ENCODE measurements at regions of chr17 and their contacts with region 1.

Region 1: GRCh38 chr17:77834170-77835115 is 124.1 kb upstream of the TNRC6C start:
- DNase-seq: peak; percentile 72 to 74
- ATAC-seq: peak; percentile 75 to 86 (median 85)
- H3K4me3 ChIP-seq: no peak overlapping the region
- H3K4me3 Mint-ChIP-seq: peak overlapping the region; percentile 45
- H3K27ac ChIP-seq: no peak overlapping the region
- H3K27ac Mint-ChIP-seq: peak overlapping the region; percentile 7 to 88
- H3K4me1 ChIP-seq: peaks cover 54% of the 10 kb centered on the region
- H3K4me1 Mint-ChIP-seq: peaks cover 41 to 43% of the 10 kb centered on the region in 2 donors
- H3K27me3 ChIP-seq: no peaks in the 10 kb centered on the region
- H3K27me3 Mint-ChIP-seq: peaks cover 12 to 19% of the 10 kb centered on the region in 2 donors
- CTCF ChIP-seq: no peak

Region 2: DNA sequence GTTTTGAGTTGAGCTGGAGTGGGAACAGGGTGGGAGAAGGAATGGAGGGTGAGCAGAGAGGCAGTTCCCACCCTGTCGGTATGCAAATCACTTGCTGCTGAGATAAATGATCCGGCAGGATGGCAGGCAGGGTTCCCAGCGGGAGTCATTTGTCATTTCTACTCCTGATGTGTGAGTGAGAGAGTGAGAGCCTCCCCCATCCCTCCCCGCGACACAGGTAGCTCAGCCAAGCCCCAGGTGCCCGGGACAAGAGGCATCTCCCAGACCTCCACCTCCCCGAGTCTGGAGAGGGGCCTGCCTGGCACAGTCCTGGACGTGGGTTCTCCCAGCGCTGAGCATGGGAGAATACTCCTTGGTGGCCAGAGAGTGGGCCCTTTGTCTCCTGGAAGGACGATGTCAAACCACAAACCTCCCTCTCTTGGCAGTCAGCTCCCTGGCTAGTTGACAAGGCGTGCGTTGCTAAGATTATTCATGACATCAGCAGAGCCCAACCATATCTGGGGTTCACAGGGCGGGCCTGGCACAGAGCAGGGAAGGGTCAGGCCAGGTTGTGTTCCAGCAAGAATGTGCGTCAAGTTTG is 90.4 kb after region 1 on chr17:
- intact Hi-C with region 1: no loop called
- DNase-seq: no peak
- ATAC-seq: no peak
- H3K4me3 ChIP-seq: no peak overlapping the region
- H3K4me3 Mint-ChIP-seq: no peak overlapping the region
- H3K27ac ChIP-seq: no peak overlapping the region
- H3K27ac Mint-ChIP-seq: no peak overlapping the region
- H3K4me1 ChIP-seq: peaks cover 10% of the 10 kb centered on the region
- H3K4me1 Mint-ChIP-seq: peaks cover 0 to 18% of the 10 kb centered on the region in 2 donors
- H3K27me3 ChIP-seq: no peaks in the 10 kb centered on the region
- H3K27me3 Mint-ChIP-seq: peaks cover 0 to 2% of the 10 kb centered on the region in 2 donors
- CTCF ChIP-seq: no peak

Region 3: GRCh38 chr17:77957857-77958715 is 123.6 kb after region 1 on chr17 and contains the start of gene TNRC6C:
- intact Hi-C with region 1: loop called (anchors 2 kb)
- DNase-seq: peak; percentile 99
- ATAC-seq: peak; percentile 88 to 97 (median 92)
- H3K4me3 ChIP-seq: peak within 1 kb of the TSS; percentile 83
- H3K4me3 Mint-ChIP-seq: peak within 1 kb of the TSS; percentile 95
- H3K27ac ChIP-seq: peak within 1 kb of the TSS; percentile 72
- H3K27ac Mint-ChIP-seq: peak within 1 kb of the TSS; percentile 88 to 93
- H3K4me1 ChIP-seq: peaks cover 21% of the 10 kb centered on the region
- H3K4me1 Mint-ChIP-seq: peaks cover 43 to 45% of the 10 kb centered on the region in 2 donors
- H3K27me3 ChIP-seq: no peaks in the 10 kb centered on the region
- H3K27me3 Mint-ChIP-seq: peaks cover 5 to 11% of the 10 kb centered on the region in 2 donors
- CTCF ChIP-seq: no peak
- total RNA-seq, gene TNRC6C: 74.3 to 100 (median 76.3) TPM

Measured in natural killer cell (primary cell).